Posterior cingulate gyrus (tissue), 11 donors: ENCODE measurements at regions of chr3 and their contacts with region 1.

Region 1: DNA sequence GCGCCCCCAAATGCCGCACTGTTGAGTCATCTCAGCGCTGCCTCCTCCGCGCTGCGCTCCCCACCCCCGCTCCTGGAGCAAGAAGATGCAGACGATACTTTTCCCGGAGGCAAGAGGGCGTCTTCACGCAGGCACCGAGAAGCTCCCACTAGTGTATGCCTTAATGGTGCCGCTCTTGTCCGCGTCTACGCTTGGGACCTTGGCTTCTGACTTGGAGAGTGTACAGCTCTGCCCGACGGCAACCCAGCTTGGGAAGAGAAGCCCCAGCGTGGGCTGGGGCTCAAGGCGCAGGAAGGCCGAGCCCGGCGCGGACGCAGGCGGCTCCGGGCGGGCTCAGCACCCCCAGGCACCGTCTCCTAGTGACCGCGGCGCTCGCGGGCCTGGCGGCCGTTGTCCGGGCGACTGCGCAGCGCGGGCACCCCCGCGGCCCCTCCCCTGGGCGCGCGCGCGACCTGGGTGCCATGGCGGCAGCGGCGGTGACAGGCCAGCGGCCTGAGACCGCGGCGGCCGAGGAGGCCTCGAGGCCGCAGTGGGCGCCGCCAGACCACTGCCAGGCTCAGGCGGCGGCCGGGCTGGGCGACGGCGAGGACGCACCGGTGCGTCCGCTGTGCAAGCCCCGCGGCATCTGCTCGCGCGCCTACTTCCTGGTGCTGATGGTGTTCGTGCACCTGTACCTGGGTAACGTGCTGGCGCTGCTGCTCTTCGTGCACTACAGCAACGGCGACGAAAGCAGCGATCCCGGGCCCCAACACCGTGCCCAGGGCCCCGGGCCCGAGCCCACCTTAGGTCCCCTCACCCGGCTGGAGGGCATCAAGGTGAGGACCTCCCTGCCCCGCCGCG is at the start of gene P4HTM:
- DNase-seq: peak; percentile 75 to 99 (median 90)

Region 2: GRCh38 chr3:49007068-49007770 is 17.2 kb after region 1 on chr3 and contains the start of gene WDR6:
- intact Hi-C with region 1: loop called (anchors 2 kb)
- DNase-seq: peak; percentile 89 to 100 (median 96)

Region 3: DNA sequence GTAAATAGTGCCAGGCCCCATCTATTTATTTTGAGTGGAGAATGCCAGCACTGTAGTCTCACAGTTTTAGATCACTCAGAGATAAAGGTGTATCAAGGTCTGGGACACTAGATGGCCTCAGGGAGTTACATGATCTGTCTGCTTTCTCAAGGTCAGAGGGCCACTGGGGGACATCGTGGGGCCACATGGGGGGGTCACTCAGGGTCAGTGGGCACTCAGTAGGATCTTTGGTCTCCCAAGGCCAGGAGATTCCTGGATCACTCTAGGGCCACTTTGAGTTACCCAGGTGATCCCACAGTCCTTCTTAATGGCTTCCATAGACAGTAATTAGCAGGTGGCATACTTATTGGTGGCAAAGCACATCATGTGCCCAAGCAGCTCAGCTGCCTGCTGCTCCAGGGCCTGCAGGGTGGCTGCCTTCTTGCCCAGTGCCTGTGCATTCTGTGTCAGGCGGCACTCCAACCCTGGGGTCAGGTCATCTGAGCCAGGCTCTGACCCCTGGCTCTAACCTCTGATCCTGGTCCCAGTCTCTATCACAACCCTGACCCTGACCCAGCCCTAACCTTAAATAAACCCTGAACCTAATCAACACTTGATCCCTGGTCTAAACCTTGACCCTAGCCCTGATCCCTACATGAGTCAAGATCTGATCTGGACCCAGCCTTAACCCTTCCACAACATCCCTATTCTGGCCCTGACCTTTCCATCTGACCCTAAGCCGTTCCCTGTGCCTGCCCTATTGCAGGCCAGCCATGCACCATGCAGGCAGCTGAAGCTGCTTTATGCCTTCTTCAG is 144.7 kb after region 1 on chr3:
- intact Hi-C with region 1: no loop called
- DNase-seq: peak in 1 of 10 donors; percentile 54

Region 4: GRCh38 chr3:49248846-49249238 is 258.8 kb after region 1 on chr3:
- intact Hi-C with region 1: no loop called
- DNase-seq: no peak